ENCODE measurements at regions of chr17 and their contacts with region 1.

Region 1: GRCh38 chr17:76384222-76384986 is at the start of gene SPHK1:
- DNase-seq: peak; percentile 74
- H3K4me3 ChIP-seq: peak within 1 kb of the TSS; percentile 48
- H3K27ac ChIP-seq: no peak within 1 kb of the TSS
- H3K4me1 ChIP-seq: peaks cover 24% of the 10 kb centered on the region
- H3K27me3 ChIP-seq: peaks cover 19% of the 10 kb centered on the region
- CTCF ChIP-seq: no peak
- total RNA-seq, gene SPHK1: 0.50 and 0.54 TPM in 2 replicates

Region 2: GRCh38 chr17:76353599-76354316 is 30.6 kb before region 1 on chr17 and contains the start of gene PRPSAP1:
- CTCF ChIA-PET with region 1: no interaction called
- POLR2A ChIA-PET with region 1: no interaction called
- intact Hi-C with region 1: loop called (anchors 1 kb)
- DNase-seq: peak; percentile 94
- H3K4me3 ChIP-seq: peak within 1 kb of the TSS; percentile 74
- H3K27ac ChIP-seq: peak within 1 kb of the TSS; percentile 96
- H3K4me1 ChIP-seq: peaks cover 6% of the 10 kb centered on the region
- H3K27me3 ChIP-seq: no peaks in the 10 kb centered on the region
- CTCF ChIP-seq: no peak; the same call in 1 of the 2 replicates
- total RNA-seq, gene PRPSAP1: 77.5 and 89.2 TPM in 2 replicates

Region 3: DNA sequence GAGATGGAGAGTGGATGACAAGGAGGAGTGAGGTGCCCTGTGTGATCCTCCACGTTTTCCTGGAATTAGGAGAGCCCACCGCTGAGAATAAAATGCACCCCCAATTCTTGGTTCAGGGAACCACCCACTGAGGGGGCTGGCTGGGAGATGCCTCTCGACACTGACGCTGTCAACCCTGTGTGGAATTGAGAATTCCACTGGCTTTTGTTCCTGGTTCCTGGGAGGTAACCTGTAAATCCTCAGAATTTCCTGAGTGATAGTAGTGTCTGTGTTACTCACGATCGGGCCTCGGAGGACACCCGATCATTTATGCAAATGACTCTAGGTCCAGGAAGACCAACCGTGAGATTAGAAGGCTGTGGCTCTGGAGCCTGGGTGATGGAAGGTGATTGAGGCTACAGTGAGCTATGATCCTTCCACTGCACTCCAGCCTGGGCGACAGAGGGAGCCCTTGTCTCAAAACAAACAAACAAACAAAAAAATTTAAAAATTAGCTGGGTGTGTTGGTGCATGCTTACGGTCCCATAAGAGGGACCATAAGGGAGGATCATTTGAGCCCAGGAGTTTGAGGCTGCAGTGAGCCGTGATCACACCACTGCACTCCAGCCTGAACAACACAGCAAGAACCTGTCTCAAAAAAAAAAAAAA is 19.0 kb before region 1 on chr17:
- CTCF ChIA-PET with region 1: interaction called, 10 read pairs
- POLR2A ChIA-PET with region 1: no interaction called
- intact Hi-C with region 1: no loop called
- DNase-seq: no peak
- H3K4me3 ChIP-seq: no peak overlapping the region
- H3K27ac ChIP-seq: no peak overlapping the region
- H3K4me1 ChIP-seq: no peaks in the 10 kb centered on the region
- H3K27me3 ChIP-seq: no peaks in the 10 kb centered on the region
- CTCF ChIP-seq: no peak

Measured in A673 (cell line).